WTC11 (cell line): ENCODE measurements at regions of chr9 and their contacts with region 1.

Region 1: DNA sequence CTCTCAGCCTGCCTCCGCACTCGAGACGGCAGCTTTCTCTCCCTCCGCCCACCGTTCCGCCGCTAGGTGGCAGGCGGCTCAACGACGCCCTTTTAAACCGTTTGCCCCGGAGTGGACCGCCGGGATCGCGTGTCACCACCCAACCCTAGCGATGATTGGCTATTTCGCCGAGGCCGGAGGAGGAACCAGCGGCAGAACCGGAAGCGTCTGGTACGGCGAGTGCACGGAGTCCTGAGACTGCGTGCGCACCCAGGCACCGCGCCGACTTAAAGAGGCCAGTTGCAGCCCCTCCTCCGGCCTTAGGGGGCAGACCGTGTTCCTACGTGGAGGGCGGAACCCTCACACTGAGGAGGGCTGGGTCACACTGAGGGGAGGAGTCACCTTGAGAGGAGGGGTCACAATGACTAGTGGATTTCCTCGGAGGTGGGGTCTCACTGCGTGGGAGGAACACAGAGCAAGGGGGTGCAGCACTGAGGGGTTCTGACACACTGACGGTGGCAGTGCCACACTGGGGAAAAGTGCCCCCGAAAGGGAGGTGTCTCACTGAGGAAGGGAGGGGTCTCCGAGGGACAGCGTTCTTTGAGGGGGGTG is 980 bp upstream of the TESK1 start:
- DNase-seq: peak; percentile 99
- ATAC-seq: peak; percentile 89
- H3K4me3 Mint-ChIP-seq: peak overlapping the region; percentile 99
- H3K27ac Mint-ChIP-seq: peak overlapping the region; percentile 100
- H3K4me1 Mint-ChIP-seq: peaks cover 25% of the 10 kb centered on the region
- H3K27me3 Mint-ChIP-seq: peaks cover 5% of the 10 kb centered on the region
- CTCF ChIP-seq: peak; percentile 83

Region 2: GRCh38 chr9:35616681-35617459 is 12.8 kb after region 1 on chr9:
- CTCF ChIA-PET with region 1: interaction called, 36 read pairs
- POLR2A ChIA-PET with region 1: interaction called, 3 read pairs
- DNase-seq: peak; percentile 66
- ATAC-seq: peak; percentile 80
- H3K4me3 Mint-ChIP-seq: peak overlapping the region; percentile 73
- H3K27ac Mint-ChIP-seq: no peak overlapping the region
- H3K4me1 Mint-ChIP-seq: peaks cover 9% of the 10 kb centered on the region
- H3K27me3 Mint-ChIP-seq: peaks cover 66% of the 10 kb centered on the region
- CTCF ChIP-seq: no peak

Region 3: DNA sequence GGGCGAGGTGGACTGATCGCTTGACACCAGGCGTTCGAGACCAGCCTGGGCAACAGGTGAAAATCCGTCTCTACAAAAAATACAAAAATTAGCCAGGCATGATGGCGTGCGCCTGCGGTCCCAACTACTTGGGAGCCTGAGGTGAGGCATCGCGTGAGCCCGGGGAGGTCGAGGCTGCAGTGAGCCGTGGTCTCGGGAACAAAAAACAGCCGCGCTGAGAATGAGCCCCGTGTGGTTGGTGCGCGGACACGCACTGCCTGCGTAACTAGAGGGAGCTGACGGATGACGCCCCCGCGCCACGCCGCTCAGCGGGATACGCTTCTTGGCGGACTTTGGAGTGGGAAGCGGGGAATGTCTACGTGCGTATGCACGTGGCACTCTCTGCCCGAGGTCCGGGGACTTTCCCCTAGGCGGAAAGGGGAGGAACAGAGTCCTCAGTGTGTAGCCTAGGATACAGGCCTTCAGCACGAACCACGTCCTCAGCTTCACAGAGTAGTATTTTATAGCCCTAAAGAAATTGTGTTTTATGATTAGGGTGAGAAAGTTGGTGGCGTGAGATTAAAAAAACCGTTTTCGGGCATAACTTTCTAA is 53.6 kb after region 1 on chr9 and contains the start of gene RMRP:
- CTCF ChIA-PET with region 1: interaction called, 26 read pairs
- POLR2A ChIA-PET with region 1: no interaction called
- DNase-seq: peak; percentile 96
- ATAC-seq: peak; percentile 90
- H3K4me3 Mint-ChIP-seq: peak within 1 kb of the TSS; percentile 85
- H3K27ac Mint-ChIP-seq: peak within 1 kb of the TSS; percentile 100
- H3K4me1 Mint-ChIP-seq: peaks cover 20% of the 10 kb centered on the region
- H3K27me3 Mint-ChIP-seq: peaks cover 23% of the 10 kb centered on the region
- CTCF ChIP-seq: no peak
- total RNA-seq, gene RMRP: 23,577 to 25,958 TPM (median 25,042 TPM) in 3 replicates